Ascending aorta (tissue), 2 donors: ENCODE measurements at regions of chr13 and their contacts with region 1.

Region 1: GRCh38 chr13:48902368-48902767 is 73.3 kb upstream of the FNDC3A start:
- DNase-seq: no peak
- H3K4me3 ChIP-seq: no peak overlapping the region
- H3K27ac ChIP-seq: no peak overlapping the region
- H3K4me1 ChIP-seq: no peaks in the 10 kb centered on the region
- H3K27me3 ChIP-seq: no peaks in the 10 kb centered on the region
- CTCF ChIP-seq: no peak

Region 2: DNA sequence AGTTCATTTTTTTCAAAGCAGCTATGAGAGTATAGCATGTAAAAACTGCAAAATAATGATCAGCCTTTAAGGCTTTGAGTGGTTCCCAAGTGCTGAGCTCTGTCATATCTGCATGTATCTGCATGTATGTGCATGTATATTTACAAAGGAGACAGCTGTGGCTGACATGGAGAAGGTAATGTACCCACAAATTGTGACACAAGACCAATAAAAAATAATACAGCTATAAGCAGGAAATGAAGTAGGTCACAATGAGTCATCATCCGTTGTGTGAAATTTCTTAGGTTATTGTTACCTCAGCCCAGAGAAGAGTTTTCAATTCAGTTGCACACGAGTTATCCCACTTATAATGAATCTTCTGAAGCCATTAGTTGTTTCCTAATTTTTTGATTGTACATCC is 746.5 kb before region 1 on chr13:
- intact Hi-C with region 1: no loop called
- DNase-seq: no peak
- H3K4me3 ChIP-seq: no peak overlapping the region
- H3K27ac ChIP-seq: peak overlapping the region in 1 of 2 donors; percentile 25
- H3K4me1 ChIP-seq: no peaks in the 10 kb centered on the region
- H3K27me3 ChIP-seq: no peaks in the 10 kb centered on the region
- CTCF ChIP-seq: no peak

Region 3: DNA sequence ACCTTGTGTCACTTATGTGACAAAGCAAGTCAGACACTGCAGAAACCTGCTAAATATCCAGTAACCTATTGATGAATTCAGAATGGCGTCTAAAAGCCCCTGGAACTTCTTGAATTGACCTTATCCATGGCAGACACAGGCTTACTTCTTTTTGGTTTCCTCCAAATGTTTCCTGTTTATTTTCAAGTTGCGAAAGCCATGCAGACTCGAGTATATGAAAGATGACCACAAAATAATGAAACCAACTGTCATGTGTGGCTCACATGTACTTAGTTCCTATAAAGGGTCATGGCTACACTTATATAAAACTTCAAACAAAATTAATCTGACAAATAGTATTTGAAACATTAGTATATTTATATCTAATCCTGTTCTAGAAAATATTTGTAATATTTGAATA is 39.8 kb before region 1 on chr13:
- intact Hi-C with region 1: no loop called
- DNase-seq: no peak
- H3K4me3 ChIP-seq: no peak overlapping the region
- H3K27ac ChIP-seq: no peak overlapping the region
- H3K4me1 ChIP-seq: no peaks in the 10 kb centered on the region
- H3K27me3 ChIP-seq: no peaks in the 10 kb centered on the region
- CTCF ChIP-seq: no peak

Region 4: DNA sequence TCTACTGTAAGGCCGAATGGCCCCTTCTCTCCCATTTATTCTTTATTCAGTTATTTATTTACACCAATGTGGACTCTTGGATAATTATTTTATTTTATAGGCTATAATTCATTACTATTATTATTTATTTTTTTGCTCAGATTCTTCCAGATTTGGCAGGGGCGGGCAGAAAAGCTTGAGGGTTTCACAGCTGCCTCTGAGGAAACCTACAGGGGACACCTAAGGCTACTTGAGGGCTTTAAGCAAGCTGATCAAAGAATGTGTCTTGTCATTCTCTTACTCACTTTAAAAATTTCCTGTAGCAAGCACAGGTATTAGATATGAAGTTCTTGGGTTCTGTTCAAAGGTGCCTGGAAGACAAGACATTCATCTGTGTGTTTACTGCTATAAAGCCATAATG is 11.5 kb after region 1 on chr13:
- intact Hi-C with region 1: loop called (anchors 1 kb)
- DNase-seq: no peak
- H3K4me3 ChIP-seq: no peak overlapping the region
- H3K27ac ChIP-seq: no peak overlapping the region
- H3K4me1 ChIP-seq: peaks cover 0 to 3% of the 10 kb centered on the region in 2 donors
- H3K27me3 ChIP-seq: no peaks in the 10 kb centered on the region
- CTCF ChIP-seq: no peak

Region 5: DNA sequence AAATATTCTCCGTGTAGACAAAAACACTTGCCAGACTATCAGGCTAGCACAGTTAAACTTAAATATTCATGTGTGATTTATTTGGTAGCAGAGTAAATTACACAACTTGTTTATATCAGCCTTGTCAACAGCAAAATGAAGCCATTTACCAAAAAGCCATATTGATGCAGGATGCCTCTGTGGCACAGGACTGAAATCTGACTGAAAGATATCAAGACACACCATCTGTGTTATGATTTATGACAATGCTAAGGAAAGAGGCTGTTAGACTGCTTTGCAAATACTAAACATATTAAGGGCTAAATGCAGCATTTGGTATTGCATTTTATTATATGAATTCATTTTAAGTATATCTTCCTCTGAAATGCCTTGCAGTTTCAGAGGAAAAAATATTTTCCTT is 28.6 kb after region 1 on chr13:
- intact Hi-C with region 1: no loop called
- DNase-seq: no peak
- H3K4me3 ChIP-seq: no peak overlapping the region
- H3K27ac ChIP-seq: no peak overlapping the region
- H3K4me1 ChIP-seq: no peaks in the 10 kb centered on the region
- H3K27me3 ChIP-seq: no peaks in the 10 kb centered on the region
- CTCF ChIP-seq: no peak

Region 6: DNA sequence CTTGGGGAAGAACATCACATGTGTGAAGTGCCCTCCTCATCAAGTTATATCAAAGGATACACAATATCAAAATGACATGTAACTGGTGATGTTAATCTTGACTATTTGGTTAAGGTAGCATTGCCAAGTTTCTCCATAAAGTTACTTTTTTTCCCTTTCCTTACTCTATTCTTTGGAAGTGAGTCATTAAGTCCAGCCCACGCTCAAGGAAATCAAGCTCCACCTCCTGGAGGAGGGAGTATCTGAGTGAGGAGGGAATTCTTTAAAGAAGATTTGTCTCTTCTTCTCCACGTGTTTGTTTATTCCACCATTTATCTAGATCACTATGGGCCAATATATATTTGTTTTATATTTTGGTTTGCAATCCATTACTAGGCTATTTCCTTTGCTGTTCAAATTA is 39.8 kb after region 1 on chr13:
- intact Hi-C with region 1: loop called (anchors 5 kb)
- DNase-seq: no peak
- H3K4me3 ChIP-seq: no peak overlapping the region
- H3K27ac ChIP-seq: no peak overlapping the region
- H3K4me1 ChIP-seq: no peaks in the 10 kb centered on the region
- H3K27me3 ChIP-seq: no peaks in the 10 kb centered on the region
- CTCF ChIP-seq: no peak

Region 7: GRCh38 chr13:49374585-49375290 is 472.4 kb after region 1 on chr13:
- intact Hi-C with region 1: no loop called
- DNase-seq: no peak
- H3K4me3 ChIP-seq: no peak overlapping the region
- H3K27ac ChIP-seq: no peak overlapping the region
- H3K4me1 ChIP-seq: peaks cover 0 to 13% of the 10 kb centered on the region in 2 donors
- H3K27me3 ChIP-seq: no peaks in the 10 kb centered on the region
- CTCF ChIP-seq: no peak